Activated CD4-positive, alpha-beta T cell treated with anti-CD3 and anti-CD28 coated beads for 36 hours (primary cell): ENCODE measurements at regions of chr16 and their contacts with region 1.

Region 1: DNA sequence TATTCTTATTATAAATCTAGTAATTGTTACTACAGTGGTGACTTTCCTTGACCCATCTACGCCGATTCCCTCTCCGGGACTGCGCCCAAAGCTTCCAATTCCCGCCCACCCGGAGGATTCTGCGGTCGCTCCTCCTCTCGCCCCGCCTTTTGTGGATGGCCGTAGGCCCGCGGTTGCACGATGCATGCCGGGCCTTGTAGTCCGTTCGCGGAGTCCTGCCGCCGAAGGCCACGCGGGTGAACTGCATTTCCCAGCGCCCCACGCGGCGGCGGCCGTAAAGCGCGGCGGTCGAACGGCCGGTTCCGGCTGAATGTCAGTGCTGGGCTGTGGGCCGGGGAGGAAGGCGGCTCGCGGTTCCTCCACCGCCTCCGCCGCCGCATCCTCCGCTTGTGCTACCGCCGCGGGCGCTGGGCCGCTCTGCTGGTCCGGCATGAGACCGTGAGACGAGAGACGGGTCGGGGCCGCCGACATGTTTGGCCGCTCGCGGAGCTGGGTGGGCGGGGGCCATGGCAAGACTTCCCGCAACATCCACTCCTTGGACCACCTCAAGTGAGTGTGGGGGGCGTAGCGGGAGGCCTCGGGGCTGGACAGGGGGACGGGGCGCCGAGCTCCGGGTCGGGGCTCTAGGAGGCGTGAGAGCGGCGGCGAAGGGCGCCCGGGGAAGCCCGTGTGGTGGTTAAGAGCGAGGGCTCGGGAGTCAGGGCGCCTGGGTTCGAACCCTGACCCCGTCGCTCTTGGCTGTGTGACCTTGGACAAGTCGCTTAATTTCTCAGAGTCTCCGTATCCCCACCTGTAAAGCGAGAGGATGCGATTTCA is at the start of gene CLEC16A:
- DNase-seq: peak; percentile 98
- ATAC-seq: peak; percentile 77
- H3K4me3 Mint-ChIP-seq: peak within 1 kb of the TSS; percentile 95
- H3K27ac Mint-ChIP-seq: peak within 1 kb of the TSS; percentile 80
- H3K4me1 Mint-ChIP-seq: peaks cover 69% of the 10 kb centered on the region
- H3K27me3 Mint-ChIP-seq: no peaks in the 10 kb centered on the region
- total RNA-seq, gene CLEC16A: 23.5 to 25.4 TPM

Region 2: DNA sequence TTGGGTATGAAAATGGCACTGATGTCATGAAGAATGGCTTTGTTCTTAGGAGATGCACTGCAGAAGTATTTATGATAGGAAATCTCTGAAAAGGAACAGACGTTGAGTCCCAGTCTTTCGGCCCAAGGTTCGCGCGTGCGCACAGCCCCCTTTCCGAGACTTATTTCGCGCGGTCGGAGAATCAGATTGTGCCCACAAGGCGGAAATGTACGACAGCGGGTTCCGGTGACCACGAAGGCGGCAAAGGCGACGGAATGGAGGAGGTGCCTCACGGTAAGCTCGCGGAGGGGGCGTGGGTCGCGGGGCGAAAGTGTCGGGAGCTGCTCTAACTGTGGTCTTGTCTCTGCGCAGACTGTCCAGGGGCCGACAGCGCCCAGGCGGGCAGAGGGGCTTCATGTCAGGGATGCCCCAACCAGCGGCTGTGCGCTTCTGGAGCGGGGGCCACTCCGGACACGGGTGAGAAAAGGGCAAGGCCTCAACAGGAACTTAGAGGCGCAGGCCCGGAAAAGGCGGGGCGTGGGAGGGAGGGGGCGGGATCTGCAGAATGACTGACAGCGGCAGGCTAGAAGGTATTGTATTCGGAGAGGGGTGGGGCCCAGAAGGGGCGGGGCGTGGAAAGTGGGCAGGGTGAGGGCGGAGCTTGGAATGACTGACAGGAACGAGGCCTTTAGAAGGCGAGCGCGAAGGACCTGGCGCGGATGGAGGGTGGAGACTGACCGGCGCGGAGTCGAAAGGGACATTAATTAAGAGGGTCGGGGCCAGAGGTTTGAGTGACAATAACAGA is 200.7 kb before region 1 on chr16 and contains the start of gene NUBP1:
- CTCF ChIA-PET with region 1: no interaction called
- POLR2A ChIA-PET with region 1: interaction called, 5 read pairs
- intact Hi-C with region 1: loop called (anchors 1 to 5 kb)
- DNase-seq: peak; percentile 100
- ATAC-seq: peak; percentile 95
- H3K4me3 Mint-ChIP-seq: peak within 1 kb of the TSS; percentile 75
- H3K27ac Mint-ChIP-seq: peak within 1 kb of the TSS; percentile 98
- H3K4me1 Mint-ChIP-seq: peaks cover 30% of the 10 kb centered on the region
- H3K27me3 Mint-ChIP-seq: no peaks in the 10 kb centered on the region
- total RNA-seq, gene NUBP1: 25.9 to 33.1 TPM

Region 3: DNA sequence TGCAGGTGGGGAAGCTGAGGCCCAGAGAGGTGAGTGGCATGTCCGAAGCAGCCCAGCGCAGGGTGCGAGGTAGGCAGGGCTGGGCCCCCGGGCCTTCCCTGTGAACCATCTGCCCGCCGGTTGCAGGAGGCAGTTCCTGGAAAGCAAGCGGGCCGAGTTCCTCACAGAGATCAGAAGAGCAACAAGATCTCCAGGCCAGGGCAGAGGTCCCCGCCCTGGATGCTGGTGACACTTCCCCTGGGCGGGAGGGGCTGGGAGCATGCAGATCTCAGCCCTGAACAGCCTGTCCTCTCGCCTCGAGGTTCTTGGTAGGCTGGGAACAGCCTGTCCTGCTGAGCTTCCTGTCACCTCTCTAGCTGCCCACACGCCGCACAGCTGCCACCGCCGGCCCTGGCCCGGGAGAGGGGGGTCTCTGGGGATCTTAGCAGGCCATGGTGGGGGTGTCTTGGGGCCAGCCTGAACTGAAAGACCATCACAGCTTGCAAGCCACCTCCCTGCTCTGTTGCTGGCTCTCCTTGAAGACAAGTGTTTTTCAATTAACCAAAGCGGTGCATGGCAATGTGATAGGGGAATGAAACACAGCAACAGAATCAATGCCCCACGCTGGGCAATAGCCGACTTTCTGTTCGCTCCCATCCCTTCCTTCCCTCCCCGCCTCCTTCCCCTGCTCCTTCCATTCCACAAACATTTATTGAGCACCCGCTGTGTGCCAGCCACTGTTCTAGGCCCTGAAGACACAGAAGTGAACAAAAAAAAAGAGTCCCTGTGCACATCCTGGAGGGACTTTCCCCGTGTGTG is 279.8 kb after region 1 on chr16:
- CTCF ChIA-PET with region 1: no interaction called
- POLR2A ChIA-PET with region 1: no interaction called
- intact Hi-C with region 1: loop called in 1 of 2 experiments (anchors 1 kb)
- DNase-seq: peak; percentile 88
- ATAC-seq: peak; percentile 55
- H3K4me3 Mint-ChIP-seq: peak overlapping the region; percentile 54
- H3K27ac Mint-ChIP-seq: peak overlapping the region; percentile 98
- H3K4me1 Mint-ChIP-seq: peaks cover 61% of the 10 kb centered on the region
- H3K27me3 Mint-ChIP-seq: no peaks in the 10 kb centered on the region

Region 4: GRCh38 chr16:11312718-11313492 is 368.4 kb after region 1 on chr16:
- CTCF ChIA-PET with region 1: no interaction called
- POLR2A ChIA-PET with region 1: no interaction called
- intact Hi-C with region 1: no loop called
- DNase-seq: peak; percentile 47
- ATAC-seq: peak; percentile 24
- H3K4me3 Mint-ChIP-seq: no peak overlapping the region
- H3K27ac Mint-ChIP-seq: peak overlapping the region; percentile 43
- H3K4me1 Mint-ChIP-seq: peaks cover 38% of the 10 kb centered on the region
- H3K27me3 Mint-ChIP-seq: no peaks in the 10 kb centered on the region

Region 5: DNA sequence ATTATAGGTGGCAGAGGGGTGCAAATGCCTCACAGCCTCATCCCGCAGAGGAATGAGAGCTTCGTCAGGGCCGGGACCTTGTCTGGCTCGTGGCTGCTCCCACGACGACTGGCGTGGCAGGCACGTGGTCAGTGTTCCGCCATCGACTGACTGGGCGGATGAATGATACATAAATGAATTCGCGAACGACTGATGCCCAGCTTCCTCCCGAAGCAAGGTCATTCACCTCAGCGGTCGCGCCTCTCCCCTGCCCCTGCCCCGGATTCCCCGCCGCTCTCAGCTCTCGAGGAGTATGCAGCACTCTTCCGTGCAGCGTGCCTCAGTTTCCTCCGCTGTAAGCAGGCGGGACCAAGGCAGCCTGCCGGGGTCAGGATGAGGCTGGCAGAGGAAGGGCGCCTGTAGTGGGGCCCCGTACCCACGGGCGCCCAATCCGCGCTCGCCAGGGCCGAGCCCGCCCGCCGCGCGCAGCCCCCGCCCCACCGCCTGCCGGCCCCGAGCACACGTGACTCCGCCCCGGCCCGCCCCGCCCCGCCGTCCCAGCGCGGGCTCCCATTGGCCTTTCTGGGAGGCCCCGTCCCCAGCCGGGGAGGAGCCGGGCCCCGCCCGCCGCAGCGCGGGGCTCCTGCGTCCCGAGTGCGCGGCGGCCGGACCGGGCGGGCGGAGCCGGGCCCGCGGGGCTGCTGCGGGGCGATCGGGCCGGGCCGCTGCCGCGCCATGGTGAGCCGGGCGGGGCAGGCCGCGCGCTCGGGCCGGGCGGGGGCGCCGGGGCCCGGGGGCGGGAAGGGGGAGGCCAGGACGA is 723.6 kb after region 1 on chr16 and contains the start of gene SNN:
- CTCF ChIA-PET with region 1: no interaction called
- POLR2A ChIA-PET with region 1: no interaction called
- intact Hi-C with region 1: loop called in 1 of 2 experiments (anchors 2 kb)
- DNase-seq: peak; percentile 93
- ATAC-seq: peak; percentile 90
- H3K4me3 Mint-ChIP-seq: peak within 1 kb of the TSS; percentile 72
- H3K27ac Mint-ChIP-seq: no peak within 1 kb of the TSS
- H3K4me1 Mint-ChIP-seq: peaks cover 73% of the 10 kb centered on the region
- H3K27me3 Mint-ChIP-seq: no peaks in the 10 kb centered on the region
- total RNA-seq, gene SNN: 6.0 to 7.2 TPM

Region 6: GRCh38 chr16:11851294-11852091 is 907.0 kb after region 1 on chr16 and contains the start of gene RSL1D1:
- CTCF ChIA-PET with region 1: no interaction called
- POLR2A ChIA-PET with region 1: no interaction called
- intact Hi-C with region 1: loop called in 1 of 2 experiments (anchors 2 kb)
- DNase-seq: peak; percentile 96
- ATAC-seq: peak; percentile 85
- H3K4me3 Mint-ChIP-seq: peak within 1 kb of the TSS; percentile 99
- H3K27ac Mint-ChIP-seq: peak within 1 kb of the TSS; percentile 96
- H3K4me1 Mint-ChIP-seq: peaks cover 52% of the 10 kb centered on the region
- H3K27me3 Mint-ChIP-seq: no peaks in the 10 kb centered on the region
- total RNA-seq, gene RSL1D1: 369 to 466 TPM

Region 7: DNA sequence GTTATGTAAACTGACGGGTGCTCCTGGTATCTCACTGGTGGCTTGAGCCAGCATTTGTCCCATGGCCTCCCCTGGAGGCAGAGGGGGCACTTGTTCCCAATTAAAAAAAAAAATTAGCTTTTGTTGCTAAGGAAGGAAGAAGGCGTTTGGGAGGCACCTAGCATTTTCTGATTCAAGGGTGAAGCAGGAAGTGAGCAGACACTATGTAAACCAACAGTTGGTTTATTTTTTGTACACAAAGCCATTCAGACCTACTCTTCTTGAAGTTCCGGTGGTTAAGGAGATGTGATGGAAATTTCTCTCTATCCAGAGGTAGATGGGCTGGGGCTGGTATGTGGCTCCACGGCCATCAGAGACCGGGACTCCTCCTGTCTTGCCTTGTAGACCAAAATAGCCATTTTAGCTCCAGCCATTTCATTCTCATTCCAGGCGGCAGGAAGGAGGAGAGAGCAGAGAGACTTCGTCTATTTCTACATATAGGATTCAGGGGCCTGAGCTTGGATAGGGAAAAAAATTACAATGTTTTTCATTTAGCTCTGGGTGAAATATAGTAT is 1135.0 kb after region 1 on chr16:
- CTCF ChIA-PET with region 1: no interaction called
- POLR2A ChIA-PET with region 1: no interaction called
- intact Hi-C with region 1: loop called in 1 of 2 experiments (anchors 5 kb)
- DNase-seq: peak; percentile 13
- ATAC-seq: no peak
- H3K4me3 Mint-ChIP-seq: peak overlapping the region; percentile 53
- H3K27ac Mint-ChIP-seq: peak overlapping the region; percentile 97
- H3K4me1 Mint-ChIP-seq: peaks cover 76% of the 10 kb centered on the region
- H3K27me3 Mint-ChIP-seq: no peaks in the 10 kb centered on the region